ENCODE measurements at regions of chr12 and their contacts with region 1.

Region 1: GRCh38 chr12:122500685-122501488 is at the start of gene ZCCHC8:
- DNase-seq: peak; percentile 87 to 97 (median 93)
- ATAC-seq: peak; percentile 90 to 94
- H3K4me3 Mint-ChIP-seq: peak within 1 kb of the TSS; percentile 84 to 99 (median 96)
- H3K27ac Mint-ChIP-seq: peak within 1 kb of the TSS; percentile 96 to 99 (median 97)
- H3K4me1 Mint-ChIP-seq: peaks cover 9 to 48% (median 34%) of the 10 kb centered on the region in 4 donors
- H3K27me3 Mint-ChIP-seq: no peaks in the 10 kb centered on the region
- polyA plus RNA-seq, gene ZCCHC8: 5.4 to 14.1 (median 8.1) TPM

Region 2: GRCh38 chr12:122107261-122107660 is 393.6 kb before region 1 on chr12:
- POLR2A ChIA-PET with region 1: interaction called, 10 read pairs
- DNase-seq: no peak
- ATAC-seq: no peak
- H3K4me3 Mint-ChIP-seq: peak overlapping the region in 9 of 10 donors; percentile 12 to 86 (median 73)
- H3K27ac Mint-ChIP-seq: peak overlapping the region; percentile 84 to 97 (median 90)
- H3K4me1 Mint-ChIP-seq: peaks cover 44 to 81% (median 80%) of the 10 kb centered on the region in 4 donors
- H3K27me3 Mint-ChIP-seq: no peaks in the 10 kb centered on the region

Region 3: GRCh38 chr12:122459211-122459610 is 41.7 kb before region 1 on chr12:
- POLR2A ChIA-PET with region 1: no interaction called
- DNase-seq: no peak
- ATAC-seq: no peak
- H3K4me3 Mint-ChIP-seq: no peak overlapping the region
- H3K27ac Mint-ChIP-seq: no peak overlapping the region
- H3K4me1 Mint-ChIP-seq: peaks cover 0 to 16% (median 6%) of the 10 kb centered on the region in 4 donors
- H3K27me3 Mint-ChIP-seq: no peaks in the 10 kb centered on the region

Region 4: DNA sequence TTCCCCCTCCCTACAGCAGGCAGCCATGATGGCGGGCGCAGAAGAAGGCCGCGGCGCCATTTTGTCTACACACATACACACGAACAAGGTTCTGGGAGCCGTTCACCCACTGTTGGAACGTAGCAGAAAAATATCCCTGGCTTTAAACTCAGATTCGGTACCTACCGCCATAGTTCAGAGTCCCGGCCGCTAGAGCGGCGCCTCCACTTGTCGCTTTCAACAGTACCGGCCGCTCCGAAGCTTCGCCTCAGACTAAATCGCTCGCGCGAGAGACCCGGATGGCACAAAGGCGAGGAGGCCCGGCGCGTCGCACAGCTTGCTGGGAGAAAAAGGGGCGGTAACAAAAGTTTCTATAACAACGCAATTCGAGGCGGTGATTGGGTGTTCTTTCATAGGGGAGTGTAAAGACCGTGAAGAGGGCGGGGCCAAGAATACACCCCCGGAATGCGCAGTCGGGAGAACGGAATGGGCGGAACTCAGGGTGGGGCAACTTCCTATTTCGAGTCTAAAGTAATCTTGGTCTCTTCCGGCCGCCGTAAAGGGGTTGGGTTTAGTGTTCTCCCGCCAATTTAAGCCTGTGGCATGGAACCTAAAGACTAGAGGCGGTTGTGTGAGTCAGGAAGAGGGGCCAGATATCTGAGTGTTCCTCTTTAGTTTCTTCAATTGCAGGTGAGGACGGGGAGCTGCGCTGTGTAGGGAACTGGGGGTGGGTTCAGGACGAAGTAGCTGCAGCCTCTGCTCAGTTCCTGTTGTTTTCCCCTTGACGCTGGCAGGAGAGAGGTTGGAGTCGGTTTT is 26.0 kb after region 1 on chr12 and contains the starts of genes KNTC1 and RSRC2:
- POLR2A ChIA-PET with region 1: interaction called, 113 read pairs
- DNase-seq: peak; percentile 81 to 99 (median 98)
- ATAC-seq: peak; percentile 88 to 91
- H3K4me3 Mint-ChIP-seq: peak within 1 kb of the TSS in 1 of 10 donors; percentile 71
- H3K27ac Mint-ChIP-seq: peak within 1 kb of the TSS in 1 of 10 donors; percentile 38
- H3K4me1 Mint-ChIP-seq: peaks cover 12 to 34% (median 26%) of the 10 kb centered on the region in 4 donors
- H3K27me3 Mint-ChIP-seq: no peaks in the 10 kb centered on the region
- polyA plus RNA-seq, gene KNTC1: 1.4 to 3.6 (median 2.0) TPM
- polyA plus RNA-seq, gene RSRC2: 18.5 to 47.5 (median 23.6) TPM

Region 5: GRCh38 chr12:122752464-122753318 is 251.8 kb after region 1 on chr12 and contains the start of gene DENR:
- POLR2A ChIA-PET with region 1: interaction called, 12 read pairs
- DNase-seq: peak; percentile 98 to 100 (median 99)
- ATAC-seq: peak; percentile 92 to 94
- H3K4me3 Mint-ChIP-seq: peak within 1 kb of the TSS; percentile 87 to 98 (median 96)
- H3K27ac Mint-ChIP-seq: peak within 1 kb of the TSS; percentile 91 to 99 (median 96)
- H3K4me1 Mint-ChIP-seq: peaks cover 22 to 56% (median 51%) of the 10 kb centered on the region in 4 donors
- H3K27me3 Mint-ChIP-seq: no peaks in the 10 kb centered on the region
- polyA plus RNA-seq, gene DENR: 68.0 to 79.9 (median 78.3) TPM